Right lobe of liver (tissue), 6 donors: ENCODE measurements at regions of chr9 and their contacts with region 1.

Region 1: GRCh38 chr9:101235105-101235866 is 149.5 kb downstream of the BAAT start:
- DNase-seq: no peak
- ATAC-seq: peak; percentile 85 to 94 (median 90)
- H3K4me3 ChIP-seq: no peak overlapping the region
- H3K27ac ChIP-seq: no peak overlapping the region
- H3K4me1 ChIP-seq: peaks cover 0 to 16% (median 8%) of the 10 kb centered on the region in 4 donors
- H3K27me3 ChIP-seq: no peaks in the 10 kb centered on the region
- CTCF ChIP-seq: peak; percentile 59 to 83 (median 70)
- POLR2A ChIP-seq: no peak

Region 2: GRCh38 chr9:101119206-101119819 is 116.0 kb before region 1 on chr9:
- intact Hi-C with region 1: loop called in 1 of 2 experiments (anchors 5 kb)
- DNase-seq: peak; percentile 67 to 78 (median 73)
- ATAC-seq: peak; percentile 100
- H3K4me3 ChIP-seq: no peak overlapping the region
- H3K27ac ChIP-seq: no peak overlapping the region
- H3K4me1 ChIP-seq: no peaks in the 10 kb centered on the region
- H3K27me3 ChIP-seq: no peaks in the 10 kb centered on the region
- CTCF ChIP-seq: peak; percentile 83 to 93 (median 88)
- POLR2A ChIP-seq: no peak

Region 3: GRCh38 chr9:101201630-101202029 is 33.7 kb before region 1 on chr9:
- intact Hi-C with region 1: no loop called
- DNase-seq: peak in 1 of 3 donors; percentile 67
- ATAC-seq: peak; percentile 96 to 98 (median 97)
- H3K4me3 ChIP-seq: no peak overlapping the region
- H3K27ac ChIP-seq: peak overlapping the region; percentile 31 to 92 (median 80)
- H3K4me1 ChIP-seq: peaks cover 0 to 8% (median 4%) of the 10 kb centered on the region in 4 donors
- H3K27me3 ChIP-seq: no peaks in the 10 kb centered on the region
- CTCF ChIP-seq: no peak
- POLR2A ChIP-seq: no peak

Region 4: DNA sequence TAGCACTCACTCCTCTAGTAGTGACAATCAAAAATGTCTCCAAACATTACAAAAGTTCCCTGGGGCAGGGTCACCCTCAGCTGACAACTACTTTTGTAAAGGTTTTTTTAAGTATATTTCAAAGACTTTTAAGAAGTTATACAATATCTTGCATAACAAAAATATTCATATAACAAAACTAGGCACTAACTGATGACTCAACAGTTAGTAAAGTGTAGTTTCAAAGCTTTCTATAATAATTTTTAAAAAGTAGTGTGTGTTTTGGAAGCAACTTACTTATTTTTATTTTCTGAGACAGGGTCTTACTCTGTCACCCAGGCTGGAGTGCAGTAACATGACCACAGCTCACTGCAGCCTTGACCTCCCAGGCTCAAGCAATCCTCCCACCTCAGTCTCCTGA is 64.6 kb after region 1 on chr9:
- intact Hi-C with region 1: no loop called
- DNase-seq: no peak
- ATAC-seq: no peak
- H3K4me3 ChIP-seq: no peak overlapping the region
- H3K27ac ChIP-seq: no peak overlapping the region
- H3K4me1 ChIP-seq: no peaks in the 10 kb centered on the region
- H3K27me3 ChIP-seq: no peaks in the 10 kb centered on the region
- CTCF ChIP-seq: no peak
- POLR2A ChIP-seq: no peak